Posterior vena cava (tissue), 2 donors: ENCODE measurements at regions of chr3 and their contacts with region 1.

Region 1: DNA sequence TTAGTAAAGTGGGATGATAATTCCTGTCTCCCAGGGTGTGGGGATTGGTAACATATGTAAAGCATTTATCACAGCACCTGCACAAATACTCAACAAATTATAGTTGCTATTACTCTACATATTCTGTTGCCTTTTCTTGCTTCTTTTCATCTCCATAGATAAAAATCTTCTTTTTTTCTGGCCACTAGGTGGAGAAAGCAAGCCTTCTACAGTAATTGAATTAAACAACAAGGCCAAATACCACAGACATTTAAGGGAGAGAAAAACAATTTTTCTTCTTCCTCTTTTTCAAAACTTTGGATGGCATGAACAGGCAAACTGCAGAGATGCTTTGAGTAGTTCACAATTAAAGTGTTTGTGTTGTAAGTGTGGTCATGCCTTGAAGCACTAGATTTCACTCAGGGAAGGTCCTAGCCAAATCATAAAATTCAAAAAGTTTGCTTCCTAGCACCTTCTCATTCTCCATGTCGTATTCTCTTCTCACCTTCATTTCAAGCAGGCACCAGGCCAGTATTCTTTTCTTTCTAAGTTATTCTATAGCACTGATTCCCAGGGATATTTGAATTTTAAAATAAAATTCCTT is 493.4 kb upstream of the TGFBR2 start:
- DNase-seq: no peak

Region 2: GRCh38 chr3:30059240-30059639 is 53.8 kb before region 1 on chr3:
- intact Hi-C with region 1: no loop called
- DNase-seq: no peak

Region 3: DNA sequence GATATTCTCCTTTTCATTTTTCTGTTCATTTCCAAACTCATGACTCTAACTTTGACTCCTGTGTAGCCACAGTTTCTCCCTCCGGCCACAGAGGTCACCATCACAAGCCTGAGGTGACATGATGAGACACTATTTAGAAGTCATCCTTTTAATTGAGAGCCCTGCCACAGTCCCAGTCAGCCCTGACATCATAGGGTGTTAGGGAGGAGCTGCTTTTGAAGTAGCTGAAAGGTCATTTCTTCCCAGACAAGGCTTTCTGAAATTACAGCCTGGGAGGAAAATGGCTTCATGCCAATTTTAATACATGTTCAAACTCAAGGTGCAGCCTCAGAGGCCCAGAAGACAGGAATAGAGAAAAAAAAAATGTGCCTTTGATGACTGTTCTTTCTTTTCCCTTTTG is 39.4 kb before region 1 on chr3:
- intact Hi-C with region 1: no loop called
- DNase-seq: no peak

Region 4: GRCh38 chr3:30199096-30199759 is 86.2 kb after region 1 on chr3:
- intact Hi-C with region 1: loop called in 1 of 2 experiments (anchors 10 kb)
- DNase-seq: peak; percentile 92

Region 5: GRCh38 chr3:30693470-30694120 is 580.6 kb after region 1 on chr3:
- intact Hi-C with region 1: loop called in 1 of 2 experiments (anchors 5 kb)
- DNase-seq: no peak